Heart left ventricle (tissue), 16 donors: ENCODE measurements at regions of chr16 and their contacts with region 1.

Region 1: DNA sequence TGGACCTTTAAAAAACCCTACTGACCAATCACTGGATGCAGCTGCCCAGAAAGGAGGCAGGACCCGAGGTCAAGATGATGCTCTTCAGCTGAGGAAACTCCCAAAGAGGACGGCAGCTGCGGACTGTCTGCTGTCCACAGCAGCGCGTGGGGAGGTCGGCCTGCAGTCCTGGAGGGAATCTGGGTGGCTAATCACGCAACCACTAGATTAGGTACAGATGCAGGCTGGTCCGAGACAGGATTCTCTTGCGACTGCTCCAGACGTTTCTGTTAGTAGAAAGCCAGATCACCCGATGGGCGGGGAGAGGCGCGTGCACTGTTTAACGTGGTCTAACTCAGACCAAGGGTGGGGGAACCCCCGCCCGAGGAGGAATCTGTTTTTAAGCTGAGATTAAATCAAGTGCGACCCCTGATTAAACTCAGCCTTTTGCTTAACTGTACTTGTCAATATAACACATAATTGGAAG is 8.8 kb downstream of the CTRB2 start:
- DNase-seq: peak in 1 of 5 donors; percentile 69
- ATAC-seq: peak in 2 of 4 donors; percentile 6 to 61
- H3K4me3 ChIP-seq: no peak overlapping the region
- H3K27ac ChIP-seq: no peak overlapping the region
- H3K4me1 ChIP-seq: peaks cover 0 to 23% (median 0%) of the 10 kb centered on the region in 12 donors
- H3K27me3 ChIP-seq: peaks cover 0 to 20% (median 9%) of the 10 kb centered on the region in 9 donors
- CTCF ChIP-seq: no peak
- POLR2A ChIP-seq: no peak

Region 2: GRCh38 chr16:75385507-75386152 is 187.5 kb after region 1 on chr16:
- intact Hi-C with region 1: loop called in 7 of 10 experiments (anchors 1 to 5 kb)
- DNase-seq: peak in 1 of 5 donors; percentile 29
- ATAC-seq: no peak
- H3K4me3 ChIP-seq: no peak overlapping the region
- H3K27ac ChIP-seq: no peak overlapping the region
- H3K4me1 ChIP-seq: peaks cover 0 to 44% (median 18%) of the 10 kb centered on the region in 12 donors
- H3K27me3 ChIP-seq: peaks cover 0 to 18% (median 0%) of the 10 kb centered on the region in 9 donors
- CTCF ChIP-seq: peak; percentile 63 to 85 (median 74)
- POLR2A ChIP-seq: no peak

Region 3: DNA sequence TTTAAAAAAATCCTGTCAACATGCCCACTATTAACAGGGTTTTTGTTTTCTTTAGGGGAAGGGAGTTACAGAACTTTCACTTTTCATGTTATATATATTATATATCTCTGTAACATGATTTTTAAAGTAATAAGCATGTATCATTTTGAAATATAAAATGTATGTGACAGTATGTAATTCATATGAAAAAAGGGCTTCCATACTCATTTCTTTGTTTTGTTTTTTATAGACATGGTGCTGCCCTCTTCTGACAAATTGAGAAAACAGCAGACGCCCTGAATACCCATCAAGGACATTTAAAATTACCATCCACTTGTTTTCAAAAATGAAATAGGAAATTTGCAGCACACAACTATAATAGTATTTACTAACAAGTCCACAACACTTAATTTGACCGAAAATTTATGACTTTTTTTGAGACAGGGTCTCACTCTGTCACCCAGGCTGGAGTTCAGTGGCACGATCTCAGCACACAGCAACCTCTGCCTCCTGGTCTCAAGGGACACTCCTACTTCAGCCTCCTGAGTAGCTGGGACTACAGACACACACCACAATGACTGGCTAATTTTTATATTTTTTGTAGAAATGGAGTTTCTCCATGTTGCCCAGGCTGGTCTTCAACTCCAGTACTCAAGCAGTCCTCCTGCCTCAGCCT is 204.8 kb after region 1 on chr16:
- intact Hi-C with region 1: loop called (anchors 1 to 10 kb)
- DNase-seq: no peak
- ATAC-seq: peak in 3 of 4 donors; percentile 23 to 50 (median 50)
- H3K4me3 ChIP-seq: no peak overlapping the region
- H3K27ac ChIP-seq: peak overlapping the region; percentile 1 to 83 (median 66)
- H3K4me1 ChIP-seq: peaks cover 0 to 29% (median 20%) of the 10 kb centered on the region in 12 donors
- H3K27me3 ChIP-seq: no peaks in the 10 kb centered on the region
- CTCF ChIP-seq: peak; percentile 53 to 81 (median 66)
- POLR2A ChIP-seq: no peak

Region 4: DNA sequence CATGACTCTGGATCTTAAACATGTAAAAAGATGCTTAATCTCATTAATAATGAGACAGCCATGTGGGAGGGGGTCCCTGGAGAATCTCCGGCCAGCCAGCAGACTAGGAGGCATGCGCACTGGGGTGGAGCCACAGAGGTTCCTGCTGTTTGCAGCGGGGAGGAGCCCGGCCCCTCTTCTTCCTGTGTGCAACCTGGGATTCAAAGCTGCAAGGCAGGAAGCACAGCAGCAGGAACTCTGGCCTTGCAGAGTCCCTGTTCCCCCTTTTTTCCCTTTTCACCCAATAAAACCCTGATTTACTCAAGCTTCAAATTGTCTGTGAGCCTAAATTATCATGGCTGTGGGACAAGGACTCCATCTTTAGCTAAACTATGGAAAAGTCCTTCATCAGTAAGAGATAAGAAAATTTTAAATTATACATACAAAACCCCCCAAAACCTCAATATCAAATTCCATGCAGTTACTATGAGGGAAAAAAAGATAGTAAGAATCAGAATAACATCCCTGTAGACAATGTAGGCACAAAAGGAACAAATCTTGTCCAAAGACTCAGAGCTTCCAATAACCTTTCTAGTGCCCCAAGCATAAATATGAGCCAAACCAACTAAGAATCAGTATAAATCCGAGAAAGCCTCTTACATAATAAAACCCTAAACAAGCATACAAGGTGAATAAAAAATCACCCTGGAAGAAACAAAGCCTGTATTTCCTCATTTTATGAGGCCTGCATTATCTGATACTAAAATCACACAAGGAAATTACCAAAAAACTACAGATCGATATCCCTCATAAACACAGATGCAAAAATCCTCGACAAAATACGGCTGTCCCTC is 223.0 kb after region 1 on chr16:
- intact Hi-C with region 1: no loop called
- DNase-seq: peak; percentile 88 to 92 (median 90)
- ATAC-seq: peak; percentile 57 to 95 (median 94)
- H3K4me3 ChIP-seq: peak overlapping the region in 4 of 12 donors; percentile 1 to 27 (median 10)
- H3K27ac ChIP-seq: peak overlapping the region in 9 of 12 donors; percentile 35 to 79 (median 51)
- H3K4me1 ChIP-seq: peaks cover 0 to 38% (median 24%) of the 10 kb centered on the region in 12 donors
- H3K27me3 ChIP-seq: no peaks in the 10 kb centered on the region
- CTCF ChIP-seq: no peak
- POLR2A ChIP-seq: no peak

Region 5: GRCh38 chr16:75464130-75464918 is 266.2 kb after region 1 on chr16 and contains the start of gene TMEM170A:
- intact Hi-C with region 1: loop called in 3 of 10 experiments (anchors 1 to 10 kb)
- DNase-seq: peak; percentile 99 to 100 (median 100)
- ATAC-seq: peak; percentile 97 to 99 (median 98)
- H3K4me3 ChIP-seq: peak within 1 kb of the TSS; percentile 67 to 100 (median 90)
- H3K27ac ChIP-seq: peak within 1 kb of the TSS; percentile 84 to 100 (median 96)
- H3K4me1 ChIP-seq: peaks cover 0 to 39% (median 13%) of the 10 kb centered on the region in 12 donors
- H3K27me3 ChIP-seq: no peaks in the 10 kb centered on the region
- CTCF ChIP-seq: peak in 11 of 12 donors; percentile 100
- POLR2A ChIP-seq: peak; percentile 73 to 97
- total RNA-seq, gene TMEM170A: 7.7 to 14.6 (median 9.5) TPM

Region 6: DNA sequence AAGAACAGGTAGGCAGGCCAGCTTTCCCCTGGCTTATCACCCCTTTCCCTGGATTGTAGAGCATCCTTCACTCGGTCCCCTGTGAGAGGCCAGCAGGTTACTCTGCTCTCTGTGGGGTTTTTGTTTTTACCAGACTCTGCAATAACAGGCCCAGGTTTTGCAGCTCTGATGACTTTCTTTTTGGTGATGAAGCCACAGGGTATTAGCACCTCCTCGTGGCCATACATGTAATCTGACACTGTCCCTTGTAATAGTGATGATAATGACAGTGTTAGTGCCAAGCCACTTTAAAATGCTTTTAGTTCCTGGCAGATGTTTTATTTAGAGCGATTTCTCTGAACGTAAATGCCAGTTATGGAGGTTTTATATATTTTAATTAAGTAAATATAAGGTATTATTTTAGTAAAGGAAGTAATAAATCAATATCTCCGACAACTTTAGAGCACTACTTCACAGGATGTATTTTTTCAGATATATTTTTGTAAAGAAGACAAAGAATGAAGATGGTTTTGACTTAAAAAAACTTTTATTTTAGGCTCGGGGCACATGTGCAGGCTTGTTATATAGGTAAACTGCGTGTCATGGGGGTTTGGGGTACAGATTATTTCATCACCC is 566.1 kb after region 1 on chr16:
- intact Hi-C with region 1: loop called in 6 of 10 experiments (anchors 2 to 10 kb)
- DNase-seq: peak in 3 of 5 donors; percentile 40 to 50 (median 45)
- ATAC-seq: peak in 3 of 4 donors; percentile 90 to 95 (median 91)
- H3K4me3 ChIP-seq: no peak overlapping the region
- H3K27ac ChIP-seq: no peak overlapping the region
- H3K4me1 ChIP-seq: no peaks in the 10 kb centered on the region
- H3K27me3 ChIP-seq: no peaks in the 10 kb centered on the region
- CTCF ChIP-seq: peak; percentile 64 to 87 (median 78)
- POLR2A ChIP-seq: no peak